Breast epithelium (tissue), 4 donors: ENCODE measurements at regions of chr17 and their contacts with region 1.

Region 1: GRCh38 chr17:5610956-5611355 is 26.6 kb upstream of the NLRP1 start:
- DNase-seq: no peak
- H3K4me3 ChIP-seq: no peak overlapping the region
- H3K27ac ChIP-seq: no peak overlapping the region
- H3K4me1 ChIP-seq: no peaks in the 10 kb centered on the region
- H3K27me3 ChIP-seq: peaks cover 0 to 14% of the 10 kb centered on the region in 2 donors
- CTCF ChIP-seq: no peak
- POLR2A ChIP-seq: no peak

Region 2: GRCh38 chr17:5651348-5651747 is 40.4 kb after region 1 on chr17:
- intact Hi-C with region 1: loop called (anchors 2 kb)
- DNase-seq: no peak
- H3K4me3 ChIP-seq: no peak overlapping the region
- H3K27ac ChIP-seq: no peak overlapping the region
- H3K4me1 ChIP-seq: no peaks in the 10 kb centered on the region
- H3K27me3 ChIP-seq: peaks cover 0 to 13% of the 10 kb centered on the region in 2 donors
- CTCF ChIP-seq: no peak
- POLR2A ChIP-seq: no peak

Region 3: GRCh38 chr17:6126768-6127167 is 515.8 kb after region 1 on chr17:
- intact Hi-C with region 1: loop called (anchors 10 kb)
- DNase-seq: no peak
- H3K4me3 ChIP-seq: no peak overlapping the region
- H3K27ac ChIP-seq: no peak overlapping the region
- H3K4me1 ChIP-seq: no peaks in the 10 kb centered on the region
- H3K27me3 ChIP-seq: no peaks in the 10 kb centered on the region
- CTCF ChIP-seq: no peak
- POLR2A ChIP-seq: no peak